Psoas muscle (tissue), 8 donors: ENCODE measurements at regions of chrX and their contacts with region 1.

Region 1: GRCh38 chrX:50905334-50905733 is 5.2 kb upstream of the BMP15 start:
- DNase-seq: no peak
- ATAC-seq: no peak
- H3K4me3 ChIP-seq: no peak overlapping the region
- H3K27ac ChIP-seq: no peak overlapping the region
- H3K4me1 ChIP-seq: no peaks in the 10 kb centered on the region
- H3K27me3 ChIP-seq: peaks cover 0 to 11% (median 0%) of the 10 kb centered on the region in 3 donors
- CTCF ChIP-seq: no peak

Region 2: GRCh38 chrX:50747471-50747900 is 157.8 kb before region 1 on chrX:
- intact Hi-C with region 1: loop called in 1 of 2 experiments (anchors 5 kb)
- DNase-seq: no peak
- ATAC-seq: no peak
- H3K4me3 ChIP-seq: no peak overlapping the region
- H3K27ac ChIP-seq: no peak overlapping the region
- H3K4me1 ChIP-seq: no peaks in the 10 kb centered on the region
- H3K27me3 ChIP-seq: peaks cover 0 to 13% (median 0%) of the 10 kb centered on the region in 3 donors
- CTCF ChIP-seq: peak; percentile 48